Cardiac septum (tissue), 1 donor: ENCODE measurements at regions of chr9 and their contacts with region 1.

Region 1: GRCh38 chr9:6055213-6055612 is 39.8 kb upstream of the RANBP6 start:
- DNase-seq: no peak

Region 2: GRCh38 chr9:5886114-5886939 is 168.9 kb before region 1 on chr9:
- intact Hi-C with region 1: loop called (anchors 2 kb)
- DNase-seq: no peak